GM10248 (cell line): ENCODE measurements at regions of chr3 and their contacts with region 1.

Region 1: GRCh38 chr3:88041005-88041404 is 17.8 kb downstream of the CGGBP1 start:
- DNase-seq: no peak
- CTCF ChIP-seq: no peak

Region 2: GRCh38 chr3:87949189-87949878 is 91.7 kb before region 1 on chr3:
- CTCF ChIA-PET with region 1: no interaction called
- POLR2A ChIA-PET with region 1: no interaction called
- DNase-seq: no peak
- CTCF ChIP-seq: no peak

Region 3: DNA sequence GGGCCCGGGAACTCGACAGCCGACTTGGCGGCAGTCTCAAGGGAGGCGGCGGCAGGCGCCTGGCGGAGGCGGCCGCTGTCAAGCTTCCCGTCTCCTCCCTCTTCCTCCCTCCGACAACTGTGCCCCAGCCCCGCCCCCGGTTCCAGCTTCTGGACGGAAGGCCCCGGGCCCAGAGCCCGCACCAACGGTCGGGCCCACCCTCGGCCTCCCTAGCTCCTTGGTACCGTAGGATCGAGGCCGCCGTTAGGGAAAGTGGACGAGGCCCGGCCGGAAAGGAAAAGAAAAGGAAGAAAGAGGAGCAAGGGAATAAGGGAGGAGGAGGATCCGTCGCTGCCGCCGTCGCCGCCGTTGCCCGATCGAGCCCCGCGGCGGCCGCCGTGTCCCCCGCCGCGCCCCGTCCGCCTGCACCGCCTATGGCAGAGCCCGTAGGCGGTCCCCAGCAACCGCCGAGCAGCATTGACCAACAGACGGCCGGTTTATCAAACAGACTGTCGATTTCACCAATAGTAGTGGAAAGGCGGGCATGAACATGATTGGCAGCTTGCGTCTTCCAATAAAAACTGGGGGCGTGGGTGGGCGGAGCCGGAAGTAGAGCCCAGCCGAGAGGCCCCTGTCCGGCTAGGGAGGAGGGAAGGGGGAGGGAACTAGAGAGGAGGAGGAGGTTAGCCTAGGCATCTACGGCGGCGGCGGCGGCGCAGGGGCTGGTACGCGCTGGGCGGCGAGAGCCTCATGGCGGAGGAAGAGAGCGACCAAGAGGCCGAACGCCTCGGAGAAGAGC is 17.8 kb after region 1 on chr3 and contains the starts of genes CGGBP1 and ZNF654:
- CTCF ChIA-PET with region 1: interaction called, 14 read pairs
- POLR2A ChIA-PET with region 1: no interaction called
- DNase-seq: peak; percentile 96
- CTCF ChIP-seq: no peak

Region 4: DNA sequence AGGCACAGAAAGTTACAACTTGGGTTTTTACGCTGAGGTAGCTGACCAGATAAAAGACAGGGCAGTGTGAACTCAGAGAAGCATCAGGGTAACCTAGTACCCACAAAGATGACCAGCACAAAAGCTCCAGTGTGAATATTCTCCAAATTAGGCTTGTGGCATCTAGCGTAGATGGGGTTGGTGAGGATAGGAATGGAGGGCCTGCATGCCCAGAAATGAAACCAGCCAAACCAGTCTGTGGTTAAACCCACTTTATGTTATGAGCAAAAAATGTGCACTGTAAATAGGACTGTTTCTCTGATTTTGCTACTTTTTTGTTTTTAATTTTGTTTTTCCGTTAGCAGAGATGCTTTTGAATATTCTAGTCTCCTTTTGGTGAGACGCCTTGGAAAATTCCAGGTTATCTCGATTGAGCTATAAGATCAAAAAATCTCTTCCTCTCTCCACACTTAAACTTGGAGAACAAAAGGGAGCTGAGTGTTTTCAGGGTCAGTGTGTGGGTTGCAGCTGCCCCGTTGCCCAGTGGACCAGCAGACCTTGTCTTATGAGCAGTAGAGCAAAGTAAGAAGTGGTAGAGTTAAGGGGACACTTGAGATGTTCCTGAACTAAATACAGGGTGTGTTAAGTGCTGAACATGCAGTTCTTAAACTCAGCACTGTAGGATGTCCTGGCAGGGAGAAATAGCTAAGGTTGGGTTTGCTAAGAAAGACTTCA is 241.7 kb after region 1 on chr3:
- CTCF ChIA-PET with region 1: no interaction called
- POLR2A ChIA-PET with region 1: no interaction called
- DNase-seq: no peak
- CTCF ChIP-seq: no peak